Activated CD4-positive, alpha-beta memory T cell treated with anti-CD3 and anti-CD28 coated beads for 36 hours (primary cell): ENCODE measurements at regions of chr12 and their contacts with region 1.

Region 1: DNA sequence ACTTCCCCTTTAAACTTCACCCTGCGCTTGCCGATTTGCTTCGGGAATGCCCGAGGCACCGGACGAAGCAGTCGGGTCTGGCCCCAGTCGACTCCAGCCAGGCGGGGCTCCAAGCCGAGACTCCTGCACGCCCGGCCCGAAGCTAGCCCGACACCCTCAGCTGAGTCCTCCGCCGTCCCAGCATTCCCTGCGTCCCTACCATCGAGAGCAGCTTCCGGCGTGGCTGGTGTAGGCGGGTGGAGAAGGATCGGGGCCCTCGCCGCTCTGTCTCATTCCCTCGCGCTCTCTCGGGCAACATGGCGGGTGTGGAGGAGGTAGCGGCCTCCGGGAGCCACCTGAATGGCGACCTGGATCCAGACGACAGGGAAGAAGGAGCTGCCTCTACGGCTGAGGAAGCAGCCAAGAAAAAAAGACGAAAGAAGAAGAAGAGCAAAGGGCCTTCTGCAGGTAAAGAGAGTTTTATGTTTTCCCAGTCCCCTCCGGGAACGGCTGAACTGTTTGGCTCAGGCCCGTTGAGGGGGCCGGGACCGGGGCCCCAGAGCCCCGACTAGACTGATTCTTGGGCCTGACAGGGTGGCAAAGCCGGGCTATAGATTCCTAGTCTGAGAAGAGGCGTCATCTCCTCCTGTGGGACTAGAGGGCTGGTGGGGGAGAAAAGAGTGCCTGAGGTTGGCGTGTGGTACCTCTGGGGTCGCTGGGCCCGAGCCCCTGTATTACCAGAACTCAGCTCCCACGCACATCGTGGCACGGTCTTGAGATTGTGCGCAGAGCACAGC is at the start of gene METAP2:
- DNase-seq: peak; percentile 97
- H3K4me3 Mint-ChIP-seq: peak within 1 kb of the TSS; percentile 100
- H3K27ac Mint-ChIP-seq: peak within 1 kb of the TSS; percentile 97
- H3K4me1 Mint-ChIP-seq: peaks cover 37% of the 10 kb centered on the region
- H3K27me3 Mint-ChIP-seq: no peaks in the 10 kb centered on the region
- total RNA-seq, gene METAP2: 107 to 108 TPM

Region 2: DNA sequence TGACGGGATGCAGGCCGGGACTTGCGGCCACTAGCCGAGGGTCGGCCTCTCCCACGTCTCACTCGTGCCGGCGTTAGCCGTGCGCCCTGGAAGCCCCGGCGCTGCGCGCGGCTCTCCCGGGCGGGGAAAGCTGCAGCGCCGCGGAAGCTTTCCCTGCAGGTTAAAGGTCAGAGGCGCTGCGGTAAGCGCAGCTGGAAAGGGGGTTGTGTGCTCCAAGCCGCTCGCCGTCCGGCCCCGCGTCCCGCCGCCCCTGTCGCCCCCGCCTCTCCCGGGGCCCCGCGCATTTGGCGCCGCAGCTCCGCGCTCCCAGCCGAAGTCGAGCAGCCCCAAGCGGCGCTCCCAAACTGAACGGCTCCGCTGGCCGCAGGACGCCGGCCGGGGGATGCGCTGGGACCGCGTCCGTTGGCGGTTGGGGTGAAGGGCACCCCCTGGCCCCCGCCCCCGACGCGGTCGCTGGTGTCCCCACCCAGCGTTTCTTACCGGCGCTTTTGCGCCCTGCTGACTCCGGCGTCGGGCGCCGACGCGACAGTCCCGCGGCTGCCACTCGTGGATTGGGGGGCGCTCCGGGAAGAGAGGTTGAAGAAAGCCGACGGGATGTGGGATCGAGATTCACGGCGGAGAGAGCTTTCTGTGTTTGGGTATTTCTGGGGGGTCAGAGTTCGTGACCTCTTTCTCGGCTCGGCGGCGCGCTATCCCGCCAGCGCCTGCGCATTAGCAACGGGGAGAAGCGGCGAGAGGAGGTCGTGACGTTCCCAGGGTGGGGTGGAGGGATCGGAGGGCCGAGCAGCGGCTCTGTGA is 401.0 kb before region 1 on chr12 and contains the start of gene NR2C1:
- CTCF ChIA-PET with region 1: no interaction called
- POLR2A ChIA-PET with region 1: interaction called, 14 read pairs
- intact Hi-C with region 1: loop called (anchors 2 kb)
- DNase-seq: peak; percentile 96
- H3K4me3 Mint-ChIP-seq: peak within 1 kb of the TSS; percentile 89
- H3K27ac Mint-ChIP-seq: peak within 1 kb of the TSS; percentile 89
- H3K4me1 Mint-ChIP-seq: peaks cover 20% of the 10 kb centered on the region
- H3K27me3 Mint-ChIP-seq: no peaks in the 10 kb centered on the region
- total RNA-seq, gene NR2C1: 25.5 to 27.1 TPM

Region 3: GRCh38 chr12:95351748-95352147 is 122.3 kb before region 1 on chr12:
- CTCF ChIA-PET with region 1: no interaction called
- POLR2A ChIA-PET with region 1: no interaction called
- intact Hi-C with region 1: no loop called
- DNase-seq: no peak
- H3K4me3 Mint-ChIP-seq: no peak overlapping the region
- H3K27ac Mint-ChIP-seq: no peak overlapping the region
- H3K4me1 Mint-ChIP-seq: no peaks in the 10 kb centered on the region
- H3K27me3 Mint-ChIP-seq: peaks cover 4% of the 10 kb centered on the region

Region 4: DNA sequence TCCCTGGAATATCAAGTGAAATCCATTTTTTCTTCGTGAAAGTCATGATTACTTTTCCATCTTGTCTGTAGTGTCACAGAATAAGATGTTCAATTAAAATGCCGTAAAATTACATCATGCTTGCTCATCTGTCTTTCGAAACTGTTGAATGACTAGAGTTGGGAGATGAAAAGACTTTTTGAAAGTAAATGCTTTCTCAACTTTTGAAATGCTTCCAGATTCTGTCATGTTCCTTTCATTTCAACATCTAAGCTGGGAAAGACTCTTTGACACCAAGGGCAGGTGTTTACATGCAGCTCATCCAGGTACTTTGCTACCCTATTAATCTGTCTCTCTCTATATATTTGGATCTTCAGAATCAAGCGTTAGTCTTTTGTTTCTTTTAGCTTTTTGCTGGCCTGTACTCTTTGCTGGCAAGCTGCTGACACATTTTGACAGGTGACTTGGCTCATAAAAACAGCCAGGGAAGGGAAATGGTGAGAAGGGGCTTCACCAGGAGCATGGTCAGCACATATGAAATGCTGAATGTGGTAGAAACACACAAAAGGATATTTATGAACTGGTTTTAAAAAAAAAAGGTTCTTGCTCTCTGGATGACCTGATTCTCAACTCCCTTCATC is 77.1 kb before region 1 on chr12:
- CTCF ChIA-PET with region 1: no interaction called
- POLR2A ChIA-PET with region 1: interaction called, 3 read pairs
- intact Hi-C with region 1: loop called (anchors 2 kb)
- DNase-seq: peak; percentile 16
- H3K4me3 Mint-ChIP-seq: no peak overlapping the region
- H3K27ac Mint-ChIP-seq: peak overlapping the region; percentile 57
- H3K4me1 Mint-ChIP-seq: peaks cover 14% of the 10 kb centered on the region
- H3K27me3 Mint-ChIP-seq: peaks cover 29% of the 10 kb centered on the region

Region 5: DNA sequence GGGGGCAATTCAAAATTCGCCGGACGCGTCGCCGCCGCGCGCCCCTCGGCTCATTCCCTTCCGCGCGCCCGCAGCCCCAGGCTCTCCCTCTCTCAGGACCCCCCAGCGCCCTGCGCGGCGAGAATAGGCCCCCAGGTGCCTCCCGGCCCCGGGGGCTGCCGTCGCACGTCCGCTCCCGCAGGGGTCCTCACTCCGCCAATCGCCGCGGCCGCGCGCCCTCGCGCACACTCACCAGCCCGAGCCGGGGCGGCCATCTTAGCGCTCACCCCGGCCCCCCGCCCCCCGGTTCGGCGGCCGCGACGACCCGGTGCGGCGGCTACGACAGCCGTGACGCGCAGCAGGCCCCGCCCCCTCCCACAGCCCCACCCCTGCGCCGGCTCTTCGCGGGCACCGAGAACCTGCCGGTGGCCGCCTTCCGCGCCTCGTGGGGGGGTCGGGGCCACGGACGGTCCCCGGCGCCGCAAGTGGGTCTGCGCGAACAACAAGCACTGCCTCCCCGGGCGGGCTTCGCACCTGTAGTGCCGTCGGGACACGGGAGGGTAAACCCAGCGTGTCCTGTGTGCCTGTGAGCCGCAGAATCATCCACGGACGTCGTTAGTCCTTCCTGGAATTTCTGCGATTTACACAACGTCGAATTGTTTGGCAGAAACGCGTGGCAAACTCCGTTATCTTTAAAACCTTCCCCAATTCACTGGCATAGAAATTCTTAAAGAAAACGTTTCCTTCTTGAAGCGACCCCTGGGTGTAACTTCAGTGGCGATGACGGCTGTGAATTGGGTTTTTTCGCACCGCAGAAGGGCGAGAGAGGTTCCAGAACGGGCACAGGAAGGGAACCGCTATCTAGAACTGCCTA is 74.7 kb after region 1 on chr12:
- CTCF ChIA-PET with region 1: interaction called, 3 read pairs
- POLR2A ChIA-PET with region 1: interaction called, 4 read pairs
- intact Hi-C with region 1: loop called (anchors 5 kb)
- DNase-seq: peak; percentile 71
- H3K4me3 Mint-ChIP-seq: peak overlapping the region; percentile 85
- H3K27ac Mint-ChIP-seq: peak overlapping the region; percentile 7
- H3K4me1 Mint-ChIP-seq: peaks cover 26% of the 10 kb centered on the region
- H3K27me3 Mint-ChIP-seq: peaks cover 20% of the 10 kb centered on the region

Region 6: DNA sequence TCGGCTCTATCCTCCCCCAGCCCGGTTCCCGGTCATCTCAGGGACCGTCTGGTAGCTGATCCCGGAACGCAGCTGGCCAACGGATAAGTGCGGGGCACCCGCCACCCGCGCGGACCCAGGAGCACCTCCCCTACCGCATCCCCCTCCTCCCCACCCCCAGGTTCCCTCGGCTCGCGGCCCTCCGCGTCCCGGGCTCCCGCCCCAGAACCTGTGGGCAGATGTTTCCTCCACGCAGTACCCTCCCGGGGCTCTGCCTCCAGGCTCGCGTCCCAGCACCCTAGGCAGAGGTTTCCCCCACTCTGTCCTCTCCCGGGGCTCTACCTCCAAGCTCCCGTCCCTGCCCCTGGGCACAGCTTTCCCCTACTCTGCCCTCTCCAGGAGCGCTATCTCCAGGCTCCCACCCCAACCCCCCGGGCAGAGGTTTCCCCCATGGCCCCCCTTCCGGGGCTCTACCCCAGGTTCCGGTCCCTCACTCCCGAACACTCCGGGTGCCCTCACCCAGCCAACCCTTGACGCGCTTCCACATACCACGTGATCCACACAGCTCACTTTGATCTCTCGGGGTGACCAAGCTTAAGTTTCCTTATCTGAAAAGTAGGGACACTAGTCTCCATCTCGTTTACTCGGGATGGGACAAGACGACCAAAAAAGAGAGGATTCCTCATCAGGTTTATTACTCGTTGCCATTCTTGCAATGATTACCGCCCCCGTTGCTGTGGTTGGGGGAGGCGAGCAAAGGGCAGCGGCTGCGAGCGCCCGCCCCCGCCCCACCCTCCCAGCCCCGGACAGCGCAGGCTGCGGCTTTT is 468.7 kb after region 1 on chr12 and contains the start of gene CCDC38:
- CTCF ChIA-PET with region 1: no interaction called
- POLR2A ChIA-PET with region 1: interaction called, 4 read pairs
- intact Hi-C with region 1: loop called (anchors 5 kb)
- DNase-seq: peak; percentile 90
- H3K4me3 Mint-ChIP-seq: peak within 1 kb of the TSS; percentile 83
- H3K27ac Mint-ChIP-seq: peak within 1 kb of the TSS; percentile 86
- H3K4me1 Mint-ChIP-seq: peaks cover 10% of the 10 kb centered on the region
- H3K27me3 Mint-ChIP-seq: no peaks in the 10 kb centered on the region
- total RNA-seq, gene CCDC38: 0.24 TPM in 1 of 2 experiments, not detected in the other